ENCODE measurements at regions of chr14 and their contacts with region 1.

Region 1: DNA sequence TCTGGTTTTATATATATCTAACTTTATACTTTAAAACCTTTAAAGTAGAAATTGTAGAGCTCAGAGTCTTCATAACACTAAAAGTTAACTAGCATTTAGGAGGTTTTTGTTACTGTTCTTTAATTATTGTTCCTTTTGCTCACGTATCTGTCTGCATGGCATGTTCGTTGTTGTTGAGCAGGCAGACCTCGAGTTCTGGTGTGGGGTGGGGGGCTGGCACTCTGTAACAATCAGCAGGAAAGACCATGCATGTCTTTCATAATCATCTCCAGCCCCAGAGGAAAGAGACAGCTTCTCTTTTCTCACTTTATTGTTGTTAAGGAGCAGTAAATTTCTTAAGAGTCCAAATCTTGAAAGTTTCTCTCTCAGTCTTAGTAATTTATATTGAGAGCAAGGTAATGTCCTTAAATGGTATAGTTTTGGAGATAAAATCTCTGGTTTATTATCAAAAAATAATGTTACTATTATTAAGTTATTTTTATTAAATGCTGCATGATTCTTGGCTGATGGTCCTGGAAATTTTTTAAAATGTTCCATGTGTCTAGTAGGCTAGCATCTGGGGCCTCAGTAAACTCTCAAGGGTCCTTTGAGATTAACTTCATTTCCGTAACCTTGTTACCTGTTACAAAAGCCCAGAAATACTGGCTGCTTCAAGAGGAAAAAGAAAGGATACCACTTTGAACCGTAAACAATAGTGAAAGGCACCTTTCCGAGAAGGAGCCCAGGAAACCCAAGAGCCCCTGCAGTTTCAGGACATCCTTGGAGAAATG is 30.3 kb downstream of the CKB start:
- DNase-seq: no peak
- ATAC-seq: no peak
- H3K4me3 ChIP-seq: no peak overlapping the region
- H3K27ac ChIP-seq: peak overlapping the region; percentile 32
- H3K4me1 ChIP-seq: peaks cover 53% of the 10 kb centered on the region
- H3K27me3 ChIP-seq: no peaks in the 10 kb centered on the region
- CTCF ChIP-seq: no peak

Region 2: DNA sequence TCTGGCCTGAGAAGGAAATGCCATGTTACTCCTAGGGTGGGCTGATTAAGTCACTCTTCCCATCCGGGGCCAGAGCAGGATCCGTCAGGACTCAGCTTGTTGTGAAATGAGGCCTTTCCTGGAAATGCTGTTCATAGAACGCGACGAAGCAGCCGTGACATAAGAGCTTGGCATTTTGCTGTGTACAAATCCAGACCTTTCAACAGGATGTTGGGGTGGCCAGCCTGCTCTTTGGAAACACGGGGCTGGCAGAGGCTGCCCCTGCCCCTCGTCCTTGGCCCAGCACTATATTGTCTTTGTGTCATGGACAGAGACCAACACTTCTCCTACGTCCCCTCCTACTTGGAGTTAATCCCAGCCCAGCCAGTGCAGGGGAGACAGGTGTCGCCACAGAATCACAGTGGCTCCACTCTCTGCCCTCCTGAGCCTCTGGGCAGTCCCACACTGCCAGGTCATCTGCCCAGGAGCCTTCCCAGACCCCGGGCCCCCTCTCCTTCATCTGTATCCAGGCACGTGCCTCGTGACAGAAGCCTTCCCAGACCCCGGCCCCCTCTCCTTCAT is 176.9 kb before region 1 on chr14:
- intact Hi-C with region 1: no loop called
- DNase-seq: peak; percentile 67 to 69
- ATAC-seq: peak; percentile 87 to 95 (median 92)
- H3K4me3 ChIP-seq: no peak overlapping the region
- H3K27ac ChIP-seq: peak overlapping the region; percentile 73
- H3K4me1 ChIP-seq: peaks cover 13% of the 10 kb centered on the region
- H3K27me3 ChIP-seq: no peaks in the 10 kb centered on the region
- CTCF ChIP-seq: no peak

Region 3: DNA sequence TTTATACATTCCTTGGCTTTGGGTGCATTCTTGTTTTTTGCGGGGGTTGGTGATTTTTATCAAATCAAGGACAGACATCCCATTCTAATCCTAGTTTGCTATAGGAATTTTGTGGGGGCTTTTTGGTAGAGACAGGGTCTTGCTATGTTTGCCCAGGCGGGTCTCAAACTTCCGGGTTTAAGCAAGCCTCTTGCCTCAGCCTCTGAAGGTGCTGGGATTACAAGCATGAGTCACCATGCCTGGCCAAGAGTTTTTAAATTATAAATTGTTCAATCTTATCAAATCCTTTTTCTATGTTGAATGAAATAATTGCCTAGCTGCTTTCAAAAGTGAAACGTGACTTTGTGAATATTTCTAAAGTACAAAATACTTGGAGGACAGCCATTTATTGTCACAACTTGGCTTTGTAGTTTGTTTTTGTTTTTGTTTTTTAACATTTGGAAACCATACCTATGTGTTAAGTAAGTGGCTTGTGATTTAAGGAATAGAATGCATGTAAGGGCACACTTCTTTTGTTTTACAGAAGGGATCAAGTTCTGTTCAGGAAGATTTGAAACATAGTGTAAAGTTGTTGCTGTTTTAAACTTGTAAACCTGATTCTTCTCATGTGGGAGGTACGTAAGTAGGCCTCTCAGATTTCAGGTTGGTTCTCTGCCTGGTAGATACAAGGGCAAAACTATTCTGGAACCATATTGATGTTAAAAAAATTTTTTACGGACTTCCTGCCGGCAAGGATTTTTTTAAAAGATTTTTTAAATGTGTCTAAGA is 93.7 kb before region 1 on chr14:
- intact Hi-C with region 1: loop called in 1 of 2 experiments (anchors 5 kb)
- DNase-seq: no peak
- ATAC-seq: peak; percentile 60 to 65 (median 63)
- H3K4me3 ChIP-seq: peak overlapping the region; percentile 43
- H3K27ac ChIP-seq: peak overlapping the region; percentile 83
- H3K4me1 ChIP-seq: peaks cover 79% of the 10 kb centered on the region
- H3K27me3 ChIP-seq: no peaks in the 10 kb centered on the region
- CTCF ChIP-seq: no peak

Measured in psoas muscle (tissue), 8 donors.